ENCODE measurements at regions of chr19 and their contacts with region 1.

Region 1: GRCh38 chr19:46728693-46729676 is 12.1 kb upstream of the PRKD2 start:
- DNase-seq: peak; percentile 87
- ATAC-seq: peak; percentile 86
- H3K4me3 Mint-ChIP-seq: peak overlapping the region; percentile 25
- H3K27ac Mint-ChIP-seq: peak overlapping the region; percentile 75
- H3K4me1 Mint-ChIP-seq: peaks cover 31% of the 10 kb centered on the region
- H3K27me3 Mint-ChIP-seq: no peaks in the 10 kb centered on the region

Region 2: GRCh38 chr19:46614114-46614722 is 114.8 kb before region 1 on chr19:
- CTCF ChIA-PET with region 1: interaction called, 10 read pairs
- POLR2A ChIA-PET with region 1: no interaction called
- DNase-seq: peak; percentile 88
- ATAC-seq: peak; percentile 52
- H3K4me3 Mint-ChIP-seq: no peak overlapping the region
- H3K27ac Mint-ChIP-seq: peak overlapping the region; percentile 78
- H3K4me1 Mint-ChIP-seq: peaks cover 81% of the 10 kb centered on the region
- H3K27me3 Mint-ChIP-seq: no peaks in the 10 kb centered on the region

Region 3: GRCh38 chr19:46704379-46705076 is 24.5 kb before region 1 on chr19:
- CTCF ChIA-PET with region 1: interaction called, 84 read pairs
- POLR2A ChIA-PET with region 1: interaction called, 4 read pairs
- DNase-seq: peak; percentile 91
- ATAC-seq: peak; percentile 91
- H3K4me3 Mint-ChIP-seq: no peak overlapping the region
- H3K27ac Mint-ChIP-seq: peak overlapping the region; percentile 77
- H3K4me1 Mint-ChIP-seq: peaks cover 10% of the 10 kb centered on the region
- H3K27me3 Mint-ChIP-seq: no peaks in the 10 kb centered on the region

Region 4: GRCh38 chr19:46717034-46717723 is 11.8 kb before region 1 on chr19 and contains the start of gene PRKD2:
- CTCF ChIA-PET with region 1: interaction called, 47 read pairs
- POLR2A ChIA-PET with region 1: interaction called, 14 read pairs
- DNase-seq: peak; percentile 93
- ATAC-seq: peak; percentile 43
- H3K4me3 Mint-ChIP-seq: peak within 1 kb of the TSS; percentile 94
- H3K27ac Mint-ChIP-seq: peak within 1 kb of the TSS; percentile 98
- H3K4me1 Mint-ChIP-seq: peaks cover 53% of the 10 kb centered on the region
- H3K27me3 Mint-ChIP-seq: no peaks in the 10 kb centered on the region
- total RNA-seq, gene PRKD2: 161 to 166 TPM

Region 5: DNA sequence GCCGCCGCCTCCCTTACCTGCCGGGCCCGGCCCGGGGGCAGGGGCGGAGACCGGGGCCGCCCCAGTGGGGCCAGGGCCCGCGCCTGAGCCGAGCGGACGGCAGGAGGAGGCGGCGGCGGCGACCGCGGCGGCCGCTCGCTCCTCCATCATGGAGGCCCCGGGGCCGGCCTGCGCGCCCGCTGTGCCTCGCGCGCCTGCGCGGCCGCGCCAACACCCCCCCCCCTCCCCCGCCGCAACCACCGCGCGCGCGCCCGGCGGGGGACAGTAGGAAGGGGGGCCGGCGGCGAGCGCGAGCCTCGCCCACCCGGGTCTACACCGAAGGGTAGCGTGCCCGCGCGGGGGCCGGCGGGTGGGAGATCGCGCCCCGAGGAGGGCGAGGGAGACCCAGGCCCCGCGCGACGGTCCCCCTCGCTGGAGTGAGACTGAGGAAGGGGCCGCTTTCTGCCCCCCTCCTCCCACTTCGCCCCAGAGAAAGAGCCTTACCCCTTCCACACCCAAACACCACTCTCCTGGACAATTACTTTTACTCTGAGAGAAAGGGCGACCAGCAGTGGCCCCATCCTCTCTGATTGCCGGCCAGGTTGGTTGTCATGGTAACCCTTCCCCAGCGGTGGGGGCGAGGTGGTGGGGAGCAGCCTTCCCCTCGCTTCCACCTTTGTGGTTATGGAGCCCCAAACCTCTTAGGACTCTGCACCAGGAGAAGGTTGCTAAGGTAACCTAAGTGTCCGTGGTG is 17.5 kb after region 1 on chr19 and contains the start of gene STRN4:
- CTCF ChIA-PET with region 1: interaction called, 28 read pairs
- POLR2A ChIA-PET with region 1: interaction called, 3 read pairs
- DNase-seq: peak; percentile 65
- ATAC-seq: peak; percentile 56
- H3K4me3 Mint-ChIP-seq: peak within 1 kb of the TSS; percentile 94
- H3K27ac Mint-ChIP-seq: peak within 1 kb of the TSS; percentile 86
- H3K4me1 Mint-ChIP-seq: peaks cover 52% of the 10 kb centered on the region
- H3K27me3 Mint-ChIP-seq: no peaks in the 10 kb centered on the region
- total RNA-seq, gene STRN4: 79.6 to 90.2 TPM

Region 6: GRCh38 chr19:46753420-46754155 is 24.6 kb after region 1 on chr19:
- CTCF ChIA-PET with region 1: interaction called, 10 read pairs
- POLR2A ChIA-PET with region 1: no interaction called
- DNase-seq: peak; percentile 85
- ATAC-seq: peak; percentile 84
- H3K4me3 Mint-ChIP-seq: no peak overlapping the region
- H3K27ac Mint-ChIP-seq: no peak overlapping the region
- H3K4me1 Mint-ChIP-seq: peaks cover 25% of the 10 kb centered on the region
- H3K27me3 Mint-ChIP-seq: no peaks in the 10 kb centered on the region

Measured in activated CD8-positive, alpha-beta T cell treated with anti-CD3 and anti-CD28 coated beads, Interleukin-2, amount 10 ng/mL, durations not matched to agents 7 days and 5 days (primary cell).